ENCODE measurements at regions of chr20 and their contacts with region 1.

Region 1: GRCh38 chr20:45971675-45972499 is at the start of gene ZNF335:
- DNase-seq: peak; percentile 82
- H3K4me3 ChIP-seq: peak within 1 kb of the TSS; percentile 97
- CTCF ChIP-seq: peak; percentile 38

Region 2: GRCh38 chr20:45812157-45813020 is 159.5 kb before region 1 on chr20 and contains the start of gene UBE2C:
- CTCF ChIA-PET with region 1: interaction called, 12 read pairs
- POLR2A ChIA-PET with region 1: no interaction called
- DNase-seq: peak; percentile 98
- H3K4me3 ChIP-seq: peak within 1 kb of the TSS; percentile 79
- CTCF ChIP-seq: no peak

Region 3: DNA sequence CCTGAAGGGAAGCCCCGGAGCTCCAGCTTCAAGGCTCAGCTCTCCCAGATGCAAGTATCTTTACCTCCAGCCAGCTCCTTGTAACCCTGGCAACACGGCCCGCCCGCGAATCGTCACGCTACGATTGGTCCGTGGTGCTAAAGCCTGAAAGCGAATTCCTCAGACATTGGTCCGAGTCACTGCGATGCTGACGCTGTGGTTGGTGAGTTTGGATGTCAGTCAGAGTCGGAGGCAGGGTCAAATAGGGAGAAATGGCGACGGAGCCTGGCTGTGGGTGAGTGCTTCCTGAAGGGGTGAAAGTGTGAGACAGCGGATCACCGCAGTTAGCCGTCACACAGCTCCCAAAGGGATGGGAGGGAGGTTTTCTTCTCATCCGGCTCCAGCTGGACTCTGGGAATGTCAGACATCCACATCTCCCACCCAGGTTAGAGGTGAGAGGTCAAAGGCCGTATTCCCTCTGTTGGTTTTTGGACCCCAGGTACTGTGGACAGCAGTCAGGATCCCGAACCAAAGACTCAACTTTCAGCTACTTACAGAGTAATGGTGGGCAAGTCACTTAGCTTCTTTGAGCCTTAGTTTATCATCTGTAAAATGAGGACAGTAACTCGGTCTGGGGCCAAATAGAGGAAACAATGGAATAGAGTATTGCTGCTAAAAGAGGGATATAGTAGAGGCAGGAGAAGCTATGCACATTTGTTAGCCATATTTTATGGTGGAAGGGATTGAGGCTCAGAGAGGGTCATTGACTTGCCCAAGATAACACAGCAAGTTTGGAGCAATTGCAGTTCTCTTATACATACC is 90.7 kb before region 1 on chr20 and contains the start of gene ZSWIM1:
- CTCF ChIA-PET with region 1: interaction called, 18 read pairs
- POLR2A ChIA-PET with region 1: interaction called, 4 read pairs
- DNase-seq: peak; percentile 94
- H3K4me3 ChIP-seq: peak within 1 kb of the TSS; percentile 82
- CTCF ChIP-seq: no peak

Region 4: DNA sequence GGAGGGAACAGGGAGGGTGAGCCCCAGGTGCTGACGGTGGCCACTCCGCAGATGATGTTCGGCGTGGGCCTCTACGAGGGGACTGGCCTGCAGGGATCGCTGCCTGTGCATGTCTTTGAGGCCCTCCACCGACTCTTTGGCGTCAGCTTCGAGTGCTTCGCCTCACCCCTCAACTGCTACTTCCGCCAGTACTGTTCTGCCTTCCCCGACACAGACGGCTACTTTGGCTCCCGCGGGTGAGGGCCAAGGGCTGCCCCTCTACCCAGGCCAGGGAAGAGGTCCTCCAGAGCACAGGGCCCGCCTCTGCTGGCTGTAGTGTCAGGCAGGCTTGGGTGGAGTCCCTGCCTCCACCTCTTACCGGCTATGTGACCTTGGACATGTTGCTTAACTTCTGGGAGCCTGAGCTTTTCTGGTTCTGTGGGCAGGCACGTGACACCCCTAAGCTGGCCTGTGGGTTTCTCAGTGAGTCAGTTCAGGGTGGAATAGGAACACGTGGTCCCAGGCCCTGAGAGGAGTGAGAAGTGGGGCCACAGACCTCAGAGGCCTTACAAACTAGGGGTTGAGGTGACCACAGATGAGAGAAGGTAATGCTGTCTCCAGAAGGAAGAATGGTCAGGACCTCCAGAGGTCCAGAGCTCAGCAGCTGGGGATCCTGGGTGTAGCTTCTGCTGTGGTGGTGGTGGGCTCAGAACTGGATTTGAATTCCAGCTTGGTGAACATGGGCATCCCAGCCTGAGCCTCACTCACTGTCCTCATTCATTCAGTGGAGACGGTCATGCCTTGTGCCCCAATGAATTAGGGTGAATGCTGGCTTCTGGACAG is 25.5 kb before region 1 on chr20:
- CTCF ChIA-PET with region 1: interaction called, 82 read pairs
- POLR2A ChIA-PET with region 1: interaction called, 3 read pairs
- DNase-seq: no peak
- H3K4me3 ChIP-seq: no peak overlapping the region
- CTCF ChIP-seq: no peak

Region 5: GRCh38 chr20:46089417-46090388 is 117.8 kb after region 1 on chr20 and contains the start of gene NCOA5:
- CTCF ChIA-PET with region 1: interaction called, 14 read pairs
- POLR2A ChIA-PET with region 1: no interaction called
- DNase-seq: peak; percentile 78
- H3K4me3 ChIP-seq: peak within 1 kb of the TSS; percentile 92
- CTCF ChIP-seq: peak; percentile 35

Measured in AG04449 (cell line).